ENCODE measurements at regions of chr1 and their contacts with region 1.

Region 1: DNA sequence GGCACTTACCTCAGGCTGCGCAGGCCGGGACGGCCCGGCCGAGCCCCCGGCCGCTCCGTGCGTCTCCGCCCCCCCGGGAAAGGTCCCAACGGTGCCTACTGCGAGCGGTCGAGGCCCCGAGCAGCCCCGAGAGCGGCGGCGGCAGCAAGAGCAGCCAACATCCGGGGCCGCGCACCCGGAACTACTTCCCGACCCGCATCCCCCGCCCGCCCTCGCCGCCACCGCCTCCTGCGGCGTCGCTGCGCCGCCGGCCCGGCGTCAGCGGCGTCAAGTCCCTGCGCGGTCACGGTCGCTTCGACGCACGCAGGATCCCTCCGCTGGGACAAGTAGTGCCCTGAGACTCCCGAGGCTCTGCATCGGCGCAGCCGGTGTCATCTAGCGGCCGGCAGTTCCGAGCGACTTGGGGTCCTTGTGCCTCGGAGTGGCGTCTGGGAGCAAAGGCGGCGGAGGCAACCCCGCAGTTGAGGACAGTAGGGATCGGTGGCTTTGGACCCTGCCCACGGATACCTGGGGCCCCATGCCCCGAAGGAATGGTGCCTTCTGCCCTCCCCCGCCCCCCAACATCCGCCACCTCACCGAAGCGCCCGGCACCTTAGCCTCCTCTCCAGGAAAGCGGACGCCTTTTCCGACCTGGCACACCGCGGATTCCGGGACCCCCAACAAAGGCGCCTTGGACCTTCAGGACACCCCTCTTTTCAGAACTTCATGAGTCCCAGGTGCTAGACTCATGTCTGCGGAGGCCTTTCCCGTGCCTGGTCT is at the start of gene FOXJ3:
- DNase-seq: peak; percentile 87
- H3K4me3 Mint-ChIP-seq: peak within 1 kb of the TSS; percentile 90
- H3K27ac Mint-ChIP-seq: peak within 1 kb of the TSS; percentile 84
- H3K4me1 Mint-ChIP-seq: peaks cover 37% of the 10 kb centered on the region
- H3K27me3 Mint-ChIP-seq: no peaks in the 10 kb centered on the region
- total RNA-seq, gene FOXJ3: 43.1 and 46.4 TPM in 2 replicates

Region 2: DNA sequence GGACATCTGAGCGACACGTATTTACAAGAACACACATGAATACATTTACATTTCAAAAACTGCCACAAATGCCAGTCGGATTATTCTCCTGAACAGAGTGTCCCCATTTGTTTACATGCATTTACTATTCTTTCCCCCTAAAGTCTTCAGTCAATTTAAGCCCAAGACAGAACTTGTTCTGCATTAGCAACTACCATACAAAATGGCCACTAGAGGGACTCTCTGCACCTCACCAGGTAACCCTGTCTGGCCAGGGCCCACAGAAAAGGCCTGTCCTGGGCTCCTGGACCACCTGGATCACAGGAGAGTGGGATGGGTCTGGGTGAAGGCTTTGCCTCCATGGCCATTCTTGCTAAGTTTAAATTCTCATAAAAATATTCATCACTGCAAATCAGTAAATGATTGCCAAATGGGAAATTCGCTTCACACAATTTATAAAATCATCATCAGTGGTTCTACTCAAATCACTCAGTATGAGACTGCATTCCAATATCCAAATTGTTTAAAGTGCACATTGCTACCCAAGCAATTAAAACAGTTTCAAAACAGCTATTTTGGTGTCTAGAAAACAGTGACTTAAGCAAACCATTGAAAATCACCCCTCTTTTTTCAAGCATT is 158.2 kb before region 1 on chr1:
- intact Hi-C with region 1: loop called (anchors 5 kb)
- DNase-seq: no peak
- H3K4me3 Mint-ChIP-seq: no peak overlapping the region
- H3K27ac Mint-ChIP-seq: no peak overlapping the region
- H3K4me1 Mint-ChIP-seq: no peaks in the 10 kb centered on the region
- H3K27me3 Mint-ChIP-seq: no peaks in the 10 kb centered on the region

Region 3: GRCh38 chr1:42214447-42214871 is 120.8 kb before region 1 on chr1:
- intact Hi-C with region 1: no loop called
- DNase-seq: no peak
- H3K4me3 Mint-ChIP-seq: no peak overlapping the region
- H3K27ac Mint-ChIP-seq: no peak overlapping the region
- H3K4me1 Mint-ChIP-seq: peaks cover 3% of the 10 kb centered on the region
- H3K27me3 Mint-ChIP-seq: no peaks in the 10 kb centered on the region

Region 4: GRCh38 chr1:42311138-42311537 is 24.1 kb before region 1 on chr1:
- intact Hi-C with region 1: no loop called
- DNase-seq: no peak
- H3K4me3 Mint-ChIP-seq: no peak overlapping the region
- H3K27ac Mint-ChIP-seq: no peak overlapping the region
- H3K4me1 Mint-ChIP-seq: peaks cover 43% of the 10 kb centered on the region
- H3K27me3 Mint-ChIP-seq: no peaks in the 10 kb centered on the region

Region 5: DNA sequence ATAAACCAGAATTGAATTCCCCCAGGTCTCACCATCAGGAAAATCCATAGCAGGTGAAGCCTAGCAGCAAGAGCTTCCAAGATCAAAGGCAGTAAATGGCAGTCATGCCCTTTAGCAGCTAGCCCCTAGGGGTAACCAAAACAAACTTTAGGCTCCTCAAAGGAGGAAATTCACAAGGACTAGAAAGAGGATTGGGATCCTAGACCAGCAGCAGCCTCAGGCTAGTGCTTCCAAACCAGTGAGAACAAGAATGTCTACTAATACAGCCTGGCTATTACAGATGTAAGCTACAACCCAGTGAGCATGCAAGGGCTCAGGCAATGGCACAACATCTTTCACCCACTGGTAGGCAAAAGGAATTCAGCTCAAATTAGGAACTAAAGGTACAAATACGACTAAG is 34.2 kb after region 1 on chr1:
- intact Hi-C with region 1: no loop called
- DNase-seq: no peak
- H3K4me3 Mint-ChIP-seq: no peak overlapping the region
- H3K27ac Mint-ChIP-seq: no peak overlapping the region
- H3K4me1 Mint-ChIP-seq: no peaks in the 10 kb centered on the region
- H3K27me3 Mint-ChIP-seq: peaks cover 29% of the 10 kb centered on the region

Region 6: DNA sequence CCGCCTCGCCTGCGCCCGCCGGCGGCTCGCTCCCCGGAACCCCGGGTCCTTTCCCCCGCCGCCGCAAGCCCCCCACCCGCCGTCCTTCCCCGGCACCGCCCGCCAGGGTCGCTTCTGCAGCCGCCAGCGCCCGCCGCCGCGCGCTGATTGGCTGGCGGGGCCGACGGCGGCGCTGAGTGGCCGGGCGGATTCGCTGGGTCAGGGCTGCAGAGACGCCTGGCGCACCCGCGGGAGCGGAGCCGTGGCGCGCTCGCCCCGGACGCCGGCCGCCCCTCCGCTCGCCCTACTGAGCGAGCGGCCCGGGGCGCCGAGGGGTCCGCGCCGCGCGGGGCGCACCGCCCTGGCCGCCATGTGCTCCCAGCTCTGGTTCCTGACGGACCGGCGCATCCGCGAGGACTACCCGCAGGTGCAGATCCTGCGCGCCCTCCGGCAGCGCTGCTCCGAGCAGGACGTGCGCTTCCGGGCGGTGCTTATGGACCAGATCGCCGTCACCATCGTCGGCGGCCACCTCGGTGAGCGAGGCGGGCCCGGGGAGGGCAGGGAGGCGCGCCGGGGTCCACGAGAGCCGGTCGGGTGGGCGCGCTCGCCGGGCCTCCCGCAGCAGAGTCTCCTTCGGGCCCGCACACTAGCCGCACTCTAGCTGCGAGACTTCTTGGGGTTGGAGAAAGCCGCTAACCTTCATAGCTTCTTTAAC is 45.5 kb after region 1 on chr1 and contains the start of gene RIMKLA:
- intact Hi-C with region 1: loop called (anchors 5 kb)
- DNase-seq: peak; percentile 35
- H3K4me3 Mint-ChIP-seq: peak within 1 kb of the TSS; percentile 78
- H3K27ac Mint-ChIP-seq: no peak within 1 kb of the TSS
- H3K4me1 Mint-ChIP-seq: peaks cover 2% of the 10 kb centered on the region
- H3K27me3 Mint-ChIP-seq: peaks cover 41% of the 10 kb centered on the region
- total RNA-seq, gene RIMKLA: 5.2 and 5.3 TPM in 2 replicates

Region 7: DNA sequence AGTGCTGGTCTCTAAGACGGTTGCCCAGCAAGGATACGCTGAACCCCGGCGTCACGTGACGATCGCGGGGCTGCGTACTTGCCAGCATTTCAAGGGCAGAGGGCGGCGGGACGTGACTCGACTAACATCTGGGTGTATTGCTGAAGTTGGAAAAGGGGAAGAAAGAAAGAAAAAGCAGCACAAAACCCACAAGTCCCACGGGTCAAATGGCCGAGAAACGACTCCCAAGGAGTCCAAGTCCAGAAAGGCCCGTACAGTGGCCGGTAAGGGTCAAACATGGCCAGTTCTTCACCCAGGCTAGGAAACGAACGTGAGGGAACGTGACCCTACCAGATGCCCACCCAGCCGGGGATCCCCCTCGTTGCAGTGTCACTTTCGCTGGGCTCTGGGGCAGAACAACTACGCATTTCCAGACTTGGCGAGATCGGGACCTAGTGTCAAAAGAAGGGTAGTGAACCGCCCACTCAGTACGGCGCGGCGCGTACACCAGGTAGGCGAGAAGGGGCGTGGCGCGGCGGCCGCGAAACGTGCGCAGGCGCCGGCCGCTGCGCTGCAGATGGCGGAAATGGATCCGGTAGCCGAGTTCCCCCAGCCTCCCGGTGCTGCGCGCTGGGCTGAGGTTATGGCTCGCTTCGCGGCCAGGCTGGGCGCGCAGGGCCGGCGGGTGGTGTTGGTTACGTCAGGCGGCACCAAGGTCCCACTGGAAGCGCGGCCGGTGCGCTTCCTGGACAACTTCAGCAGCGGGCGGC is 121.0 kb after region 1 on chr1 and contains the starts of genes PPCS and ZMYND12:
- intact Hi-C with region 1: loop called (anchors 1 kb)
- DNase-seq: peak; percentile 87
- H3K4me3 Mint-ChIP-seq: peak within 1 kb of the TSS; percentile 93
- H3K27ac Mint-ChIP-seq: peak within 1 kb of the TSS; percentile 98
- H3K4me1 Mint-ChIP-seq: peaks cover 24% of the 10 kb centered on the region
- H3K27me3 Mint-ChIP-seq: peaks cover 3% of the 10 kb centered on the region
- total RNA-seq, gene PPCS: 41.4 and 41.8 TPM in 2 replicates
- total RNA-seq, gene ZMYND12: 0.11 and 0.28 TPM in 2 replicates